ENCODE measurements at regions of chr3 and their contacts with region 1.

Region 1: GRCh38 chr3:138479438-138479863 is 45.0 kb downstream of the ESYT3 start:
- DNase-seq: peak; percentile 66
- H3K4me3 Mint-ChIP-seq: no peak overlapping the region
- H3K27ac Mint-ChIP-seq: no peak overlapping the region
- H3K4me1 Mint-ChIP-seq: no peaks in the 10 kb centered on the region
- H3K27me3 Mint-ChIP-seq: peaks cover 4% of the 10 kb centered on the region

Region 2: DNA sequence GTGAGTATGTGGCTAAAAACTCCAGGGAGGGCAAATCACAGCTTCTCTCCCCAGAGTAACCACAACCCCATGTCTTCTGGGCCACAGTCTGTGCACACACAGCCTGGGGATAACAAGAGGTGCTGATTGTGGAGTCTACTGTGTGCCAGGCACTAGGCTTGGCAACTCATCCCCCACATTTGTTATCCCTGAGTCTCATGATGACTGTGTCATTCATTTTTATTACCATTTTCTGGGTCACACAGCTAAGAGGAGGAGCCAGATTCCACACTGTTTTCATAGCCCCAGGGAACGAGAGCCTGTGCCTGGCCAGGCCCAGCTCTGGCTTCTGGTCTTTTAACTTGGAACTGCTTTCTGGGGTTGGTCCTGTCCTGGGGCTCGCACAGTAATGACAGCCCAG is 10.6 kb before region 1 on chr3:
- CTCF ChIA-PET with region 1: interaction called, 12 read pairs
- DNase-seq: no peak
- H3K4me3 Mint-ChIP-seq: no peak overlapping the region
- H3K27ac Mint-ChIP-seq: no peak overlapping the region
- H3K4me1 Mint-ChIP-seq: no peaks in the 10 kb centered on the region
- H3K27me3 Mint-ChIP-seq: peaks cover 39% of the 10 kb centered on the region

Region 3: GRCh38 chr3:138594150-138594934 is 114.9 kb after region 1 on chr3 and contains the start of gene CEP70:
- CTCF ChIA-PET with region 1: interaction called, 33 read pairs
- DNase-seq: peak; percentile 94
- H3K4me3 Mint-ChIP-seq: peak within 1 kb of the TSS; percentile 73
- H3K27ac Mint-ChIP-seq: peak within 1 kb of the TSS; percentile 93
- H3K4me1 Mint-ChIP-seq: peaks cover 13% of the 10 kb centered on the region
- H3K27me3 Mint-ChIP-seq: no peaks in the 10 kb centered on the region